Dorsolateral prefrontal cortex (tissue), 120 donors: ENCODE measurements at regions of chr16 and their contacts with region 1.

Region 1: DNA sequence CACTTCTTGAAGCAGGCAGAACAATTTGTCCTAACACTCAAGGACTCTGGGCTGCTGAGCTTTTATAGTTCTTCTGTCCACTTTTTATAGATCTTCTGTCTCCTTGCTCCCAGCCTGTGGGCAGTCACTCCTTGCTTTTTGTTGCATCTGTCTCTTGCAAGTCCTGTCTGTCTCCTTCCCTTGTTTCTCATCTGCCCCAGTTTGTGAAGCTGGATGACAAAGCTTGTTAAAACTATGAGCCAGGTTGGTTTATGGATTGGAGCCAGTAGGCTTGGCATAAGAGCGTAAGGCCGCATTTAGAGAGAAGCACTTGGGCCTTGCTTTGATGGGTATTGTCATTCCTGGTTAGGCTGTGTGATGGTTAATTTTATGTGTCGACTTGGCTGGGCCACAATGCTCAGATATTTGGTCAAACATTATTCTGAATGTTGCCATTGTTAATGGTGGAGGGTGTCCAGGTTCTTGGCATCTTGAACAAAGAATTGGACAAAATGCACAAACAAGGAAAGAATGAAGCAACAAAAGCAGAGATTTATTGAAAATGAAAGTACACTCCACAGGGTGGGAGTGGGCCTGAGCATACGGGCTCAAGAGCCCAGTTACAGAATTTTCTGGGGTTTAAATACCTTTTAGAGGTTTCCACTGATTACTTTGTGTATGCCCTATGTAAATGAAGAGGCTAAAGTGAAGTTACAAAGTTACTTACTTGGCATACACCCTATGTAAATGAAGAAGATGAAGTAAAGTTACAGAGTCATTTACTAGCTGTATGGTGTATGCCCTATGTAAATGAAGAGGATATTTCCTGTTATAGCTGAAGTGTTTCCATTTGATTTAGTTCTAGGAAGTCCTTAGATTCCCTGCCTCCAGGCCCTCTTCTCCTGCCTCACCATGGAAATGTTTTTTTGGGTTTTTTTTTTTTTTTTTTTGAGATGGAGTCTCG is 8.0 kb upstream of the CPPED1 start:
- DNase-seq: peak in 1 of 10 donors; percentile 21
- H3K4me3 ChIP-seq: no peak overlapping the region
- H3K27ac ChIP-seq: peak overlapping the region in 52 of 59 donors; percentile 12 to 89 (median 68)
- H3K27me3 ChIP-seq: no peaks in the 10 kb centered on the region
- CTCF ChIP-seq: no peak

Region 2: GRCh38 chr16:11949527-11949926 is 862.2 kb before region 1 on chr16:
- intact Hi-C with region 1: no loop called
- DNase-seq: peak in 3 of 10 donors; percentile 11 to 42 (median 33)
- H3K4me3 ChIP-seq: no peak overlapping the region
- H3K27ac ChIP-seq: no peak overlapping the region
- H3K27me3 ChIP-seq: no peaks in the 10 kb centered on the region
- CTCF ChIP-seq: peak in 54 of 56 donors; percentile 33 to 82 (median 62)

Region 3: DNA sequence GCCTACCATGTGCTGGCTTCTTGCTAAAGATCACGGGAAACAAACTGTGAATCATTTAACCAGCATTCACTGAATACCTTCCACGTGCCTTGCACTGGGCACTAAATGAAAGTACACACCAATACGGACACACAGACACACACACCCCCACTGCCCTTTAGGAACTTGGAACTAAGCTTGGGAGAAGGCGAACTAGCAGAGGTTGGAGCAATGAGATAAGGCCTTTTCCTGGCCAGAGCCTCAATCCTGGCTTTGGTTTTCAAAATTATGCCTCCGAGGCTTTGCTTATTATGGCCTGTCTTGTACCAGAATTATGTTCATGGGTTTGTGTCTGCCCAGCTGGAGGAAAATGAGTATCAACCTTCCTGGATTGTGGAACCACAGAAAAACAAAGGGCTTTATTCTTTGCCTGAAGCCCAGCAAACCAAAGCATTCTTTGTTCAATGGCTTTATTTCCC is 40.3 kb before region 1 on chr16:
- intact Hi-C with region 1: loop called in 1 of 2 experiments (anchors 5 kb)
- DNase-seq: no peak
- H3K4me3 ChIP-seq: peak overlapping the region in 28 of 59 donors; percentile 3 to 53 (median 18)
- H3K27ac ChIP-seq: peak overlapping the region; percentile 55 to 98 (median 90)
- H3K27me3 ChIP-seq: no peaks in the 10 kb centered on the region
- CTCF ChIP-seq: peak in 1 of 56 donors; percentile 11

Region 4: DNA sequence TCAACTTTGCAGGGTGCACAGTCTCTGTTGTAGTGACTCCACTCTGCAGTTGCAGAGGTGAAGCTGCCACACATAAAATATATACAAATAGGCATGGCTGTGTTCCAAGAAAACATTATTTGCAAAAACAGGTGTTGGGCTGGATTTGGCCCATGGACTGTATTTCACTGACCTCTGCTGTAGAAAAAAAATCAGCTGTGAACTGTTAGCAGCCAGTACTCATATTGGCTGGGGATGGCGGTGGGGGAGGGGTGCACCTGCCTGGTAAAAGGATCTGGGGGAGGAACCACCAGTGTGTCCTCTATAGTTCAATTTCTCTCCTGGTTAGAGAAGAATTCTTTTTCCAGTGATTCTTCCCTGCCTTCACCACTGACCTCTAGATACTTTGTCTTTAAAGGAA is 139.7 kb after region 1 on chr16:
- intact Hi-C with region 1: no loop called
- DNase-seq: no peak
- H3K4me3 ChIP-seq: no peak overlapping the region
- H3K27ac ChIP-seq: no peak overlapping the region
- H3K27me3 ChIP-seq: no peaks in the 10 kb centered on the region
- CTCF ChIP-seq: no peak

Region 5: DNA sequence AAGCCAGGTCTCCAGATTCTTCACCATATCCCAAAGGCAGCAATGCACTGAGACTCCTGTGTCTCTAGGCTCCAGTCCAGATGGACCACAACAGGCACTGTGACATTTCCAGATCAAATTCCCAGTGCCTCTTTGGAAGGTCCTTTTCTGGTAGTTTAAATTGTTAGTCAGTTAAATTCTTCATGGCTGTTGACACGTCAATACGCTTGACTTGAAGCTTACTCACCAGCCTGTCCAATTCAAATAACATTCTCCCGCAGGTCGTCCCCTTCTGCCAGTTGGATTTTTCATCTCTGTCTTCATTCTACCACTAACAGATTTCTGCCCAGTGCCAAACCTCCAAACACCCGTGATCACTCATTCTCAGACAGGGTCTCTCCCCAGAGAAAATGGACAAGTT is 176.4 kb after region 1 on chr16:
- intact Hi-C with region 1: no loop called
- DNase-seq: no peak
- H3K4me3 ChIP-seq: no peak overlapping the region
- H3K27ac ChIP-seq: no peak overlapping the region
- H3K27me3 ChIP-seq: peaks cover 0 to 5% (median 0%) of the 10 kb centered on the region in 45 donors
- CTCF ChIP-seq: no peak

Region 6: DNA sequence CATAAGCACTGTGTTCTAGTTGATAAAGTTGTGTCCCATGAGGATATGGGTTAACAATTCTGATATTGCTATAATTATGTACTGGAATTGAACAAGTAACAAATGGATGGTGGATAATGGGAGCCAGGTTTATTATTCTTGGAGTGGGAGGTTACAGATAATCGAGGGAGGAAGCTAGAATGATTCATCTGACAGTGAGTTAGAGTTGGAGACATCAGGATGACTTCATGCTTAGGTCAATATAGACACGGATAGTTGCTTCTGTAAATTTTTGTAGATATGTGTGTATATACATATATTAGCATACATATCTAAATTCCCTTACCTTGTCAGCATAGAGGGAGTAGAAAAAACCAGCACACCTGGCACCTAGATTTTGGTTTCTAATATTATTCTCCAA is 383.1 kb after region 1 on chr16:
- intact Hi-C with region 1: no loop called
- DNase-seq: no peak
- H3K4me3 ChIP-seq: no peak overlapping the region
- H3K27ac ChIP-seq: no peak overlapping the region
- H3K27me3 ChIP-seq: peaks cover 0 to 4% (median 0%) of the 10 kb centered on the region in 45 donors
- CTCF ChIP-seq: no peak